Panc1 (cell line): ENCODE measurements at regions of chr15 and their contacts with region 1.

Region 1: GRCh38 chr15:69225355-69226025 is 65.1 kb downstream of the GLCE start:
- DNase-seq: no peak
- ATAC-seq: no peak
- H3K4me3 ChIP-seq: no peak overlapping the region
- H3K27ac ChIP-seq: no peak overlapping the region
- H3K4me1 ChIP-seq: no peaks in the 10 kb centered on the region
- H3K27me3 ChIP-seq: no peaks in the 10 kb centered on the region
- CTCF ChIP-seq: peak; percentile 32; the same call in 1 of the 2 replicates

Region 2: GRCh38 chr15:69086427-69087204 is 138.9 kb before region 1 on chr15:
- CTCF ChIA-PET with region 1: interaction called, 3 read pairs
- POLR2A ChIA-PET with region 1: interaction called, 11 read pairs
- in situ Hi-C with region 1: no loop called
- intact Hi-C with region 1: no loop called
- DNase-seq: no peak
- ATAC-seq: no peak
- H3K4me3 ChIP-seq: no peak overlapping the region
- H3K27ac ChIP-seq: no peak overlapping the region
- H3K4me1 ChIP-seq: no peaks in the 10 kb centered on the region; the same call in 1 of the 2 replicates
- H3K27me3 ChIP-seq: peaks cover 11% of the 10 kb centered on the region
- CTCF ChIP-seq: no peak

Region 3: GRCh38 chr15:69149803-69150202 is 75.7 kb before region 1 on chr15:
- CTCF ChIA-PET with region 1: no interaction called
- POLR2A ChIA-PET with region 1: no interaction called
- in situ Hi-C with region 1: no loop called
- intact Hi-C with region 1: no loop called
- DNase-seq: no peak
- ATAC-seq: no peak
- H3K4me3 ChIP-seq: no peak overlapping the region
- H3K27ac ChIP-seq: no peak overlapping the region
- H3K4me1 ChIP-seq: no peaks in the 10 kb centered on the region
- H3K27me3 ChIP-seq: peaks cover 40% of the 10 kb centered on the region
- CTCF ChIP-seq: no peak

Region 4: GRCh38 chr15:69237718-69238117 is 12.2 kb after region 1 on chr15:
- CTCF ChIA-PET with region 1: no interaction called
- POLR2A ChIA-PET with region 1: interaction called, 12 read pairs
- in situ Hi-C with region 1: no loop called
- intact Hi-C with region 1: no loop called
- DNase-seq: no peak
- ATAC-seq: no peak
- H3K4me3 ChIP-seq: no peak overlapping the region
- H3K27ac ChIP-seq: no peak overlapping the region
- H3K4me1 ChIP-seq: no peaks in the 10 kb centered on the region
- H3K27me3 ChIP-seq: no peaks in the 10 kb centered on the region
- CTCF ChIP-seq: no peak